GM12878 (cell line): ENCODE measurements at regions of chr10 and their contacts with region 1.

Region 1: DNA sequence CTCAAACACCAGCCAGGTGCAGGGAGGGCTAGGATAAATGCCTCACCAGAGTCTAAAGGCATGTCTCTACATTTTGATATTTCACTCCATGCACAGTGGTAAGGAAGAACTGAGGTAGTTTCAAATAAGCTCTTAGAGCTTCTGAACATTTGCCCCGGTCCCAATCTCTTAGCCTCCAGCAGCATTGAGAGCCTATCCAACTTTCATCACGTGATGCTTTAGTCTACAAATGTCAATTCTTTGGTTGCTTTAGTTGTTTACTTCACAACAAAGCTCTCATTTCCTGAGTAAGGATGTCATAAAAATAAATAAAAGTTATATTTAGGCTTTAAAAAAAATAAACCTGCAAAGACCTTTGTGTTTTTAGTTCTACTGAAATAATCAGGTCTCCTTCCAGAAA is 11.7 kb downstream of the ITIH5 start:
- DNase-seq: no peak
- ATAC-seq: no peak
- H3K4me3 ChIP-seq: no peak overlapping the region
- H3K27ac ChIP-seq: no peak overlapping the region
- H3K4me1 ChIP-seq: no peaks in the 10 kb centered on the region
- H3K27me3 ChIP-seq: no peaks in the 10 kb centered on the region; a peak in 2 of 4 replicates
- CTCF ChIP-seq: no peak
- EP300 ChIP-seq: no peak
- POLR2A ChIP-seq: no peak
- RAD21 ChIP-seq: no peak

Region 2: GRCh38 chr10:7583626-7584025 is 71.4 kb before region 1 on chr10:
- CTCF ChIA-PET with region 1: no interaction called
- POLR2A ChIA-PET with region 1: no interaction called
- RAD21 ChIA-PET with region 1: no interaction called
- SMC1A ChIA-PET with region 1: no interaction called
- in situ Hi-C with region 1: no loop called
- intact Hi-C with region 1: no loop called
- DNase-seq: no peak
- ATAC-seq: no peak
- H3K4me3 ChIP-seq: no peak overlapping the region
- H3K27ac ChIP-seq: no peak overlapping the region
- H3K4me1 ChIP-seq: no peaks in the 10 kb centered on the region
- H3K27me3 ChIP-seq: no peaks in the 10 kb centered on the region; a peak in 1 of 4 replicates
- CTCF ChIP-seq: no peak
- EP300 ChIP-seq: no peak
- POLR2A ChIP-seq: no peak
- RAD21 ChIP-seq: no peak

Region 3: GRCh38 chr10:7635408-7636110 is 19.5 kb before region 1 on chr10:
- CTCF ChIA-PET with region 1: no interaction called
- POLR2A ChIA-PET with region 1: no interaction called
- RAD21 ChIA-PET with region 1: no interaction called
- SMC1A ChIA-PET with region 1: no interaction called
- in situ Hi-C with region 1: no loop called
- intact Hi-C with region 1: loop called (anchors 2 kb)
- DNase-seq: no peak
- ATAC-seq: no peak
- H3K4me3 ChIP-seq: no peak overlapping the region
- H3K27ac ChIP-seq: no peak overlapping the region
- H3K4me1 ChIP-seq: no peaks in the 10 kb centered on the region
- H3K27me3 ChIP-seq: no peaks in the 10 kb centered on the region
- CTCF ChIP-seq: no peak
- EP300 ChIP-seq: no peak
- POLR2A ChIP-seq: no peak
- RAD21 ChIP-seq: no peak

Region 4: DNA sequence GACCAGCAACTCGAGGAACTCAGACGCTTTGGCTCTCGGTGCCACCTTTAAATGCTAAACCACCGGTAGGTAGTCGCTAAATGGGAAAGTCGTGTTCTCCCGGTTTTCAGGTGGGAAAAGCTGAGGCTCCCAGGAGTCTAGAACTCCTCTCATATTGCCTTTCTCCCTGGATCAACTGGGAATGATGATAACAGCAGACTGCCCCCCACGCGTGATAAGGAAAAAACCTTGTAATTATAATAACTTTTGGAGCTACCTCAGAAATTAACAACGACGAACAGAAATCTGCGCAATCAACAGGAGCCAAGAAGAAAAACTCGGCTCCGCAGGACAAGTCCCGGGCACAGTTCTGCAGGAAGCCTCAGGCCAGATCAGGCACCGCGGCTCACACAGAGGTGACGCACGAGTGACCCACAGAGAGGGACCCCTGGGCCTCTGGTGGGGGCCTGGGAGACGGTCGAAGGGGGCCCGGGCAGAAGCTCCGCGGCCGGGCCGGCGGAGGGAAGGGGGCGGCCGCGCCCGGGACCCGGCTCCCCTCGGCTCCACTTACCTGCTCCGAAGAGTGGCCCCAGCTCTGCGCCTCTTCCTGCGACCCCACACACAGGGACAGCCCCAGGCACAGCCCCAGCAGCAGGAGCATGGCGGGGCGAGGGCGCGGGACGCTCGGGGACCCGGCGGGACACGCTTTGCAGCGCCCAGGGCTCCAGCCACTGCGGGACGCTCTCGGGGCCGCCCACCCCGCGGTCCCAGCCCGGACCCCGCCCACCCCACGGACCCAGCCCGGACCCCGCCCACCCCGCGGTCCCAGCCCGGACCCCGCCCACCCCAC is 11.4 kb after region 1 on chr10 and contains the start of gene ITIH5:
- CTCF ChIA-PET with region 1: no interaction called
- POLR2A ChIA-PET with region 1: no interaction called
- RAD21 ChIA-PET with region 1: no interaction called
- SMC1A ChIA-PET with region 1: no interaction called
- in situ Hi-C with region 1: no loop called
- intact Hi-C with region 1: no loop called
- DNase-seq: no peak
- ATAC-seq: no peak
- H3K4me3 ChIP-seq: no peak within 1 kb of the TSS
- H3K27ac ChIP-seq: no peak within 1 kb of the TSS
- H3K4me1 ChIP-seq: no peaks in the 10 kb centered on the region
- H3K27me3 ChIP-seq: peaks cover 2 to 11% of the 10 kb centered on the region in 2 experiments
- CTCF ChIP-seq: no peak
- EP300 ChIP-seq: no peak
- POLR2A ChIP-seq: no peak
- RAD21 ChIP-seq: no peak
- polyA plus RNA-seq, gene ITIH5: not detected